ENCODE measurements at regions of chr1 and their contacts with region 1.

Region 1: DNA sequence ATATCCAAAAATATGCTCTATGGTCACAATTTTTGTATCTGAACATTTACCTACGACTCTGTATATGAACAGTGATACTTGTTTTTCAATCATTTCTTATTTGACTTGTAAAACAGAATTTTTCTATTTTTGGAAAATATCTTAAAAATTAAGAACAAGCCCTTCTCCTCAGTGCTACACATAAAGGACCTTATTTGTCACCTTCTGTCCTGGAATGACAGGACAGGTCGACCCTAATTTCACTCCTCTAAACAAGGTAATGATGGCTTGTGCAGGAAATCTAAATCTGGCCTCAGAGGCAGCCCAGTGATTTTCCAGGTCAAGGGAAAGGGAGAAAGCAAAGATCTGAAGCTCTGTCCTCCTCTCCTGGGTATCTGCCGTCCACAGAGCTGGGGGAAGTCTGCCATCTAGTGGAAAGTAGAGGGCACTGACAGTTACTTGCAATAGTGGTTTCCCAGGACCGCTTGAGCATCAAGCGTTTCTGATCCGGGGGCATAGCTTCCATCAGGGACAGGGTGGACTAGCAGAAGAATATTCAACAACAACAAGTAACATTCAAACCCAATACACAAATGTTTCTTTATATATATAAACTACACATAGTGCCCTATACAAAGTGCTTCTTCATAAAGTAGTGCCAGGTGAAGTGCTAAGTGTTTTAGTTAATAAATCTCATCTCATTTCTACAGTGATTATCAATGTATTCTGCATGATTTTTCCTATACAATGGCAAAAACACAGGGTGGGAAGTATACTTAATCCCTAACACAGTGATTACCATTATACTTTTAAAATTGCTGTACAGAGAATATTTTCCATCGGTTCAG is 74.6 kb downstream of the SLC25A24 start:
- DNase-seq: peak in 4 of 5 donors; percentile 82 to 94 (median 88)
- H3K4me3 ChIP-seq: no peak overlapping the region
- H3K27ac ChIP-seq: no peak overlapping the region
- H3K4me1 ChIP-seq: no peaks in the 10 kb centered on the region
- H3K27me3 ChIP-seq: no peaks in the 10 kb centered on the region
- CTCF ChIP-seq: peak; percentile 95

Region 2: GRCh38 chr1:107782217-107782845 is 343.2 kb before region 1 on chr1:
- intact Hi-C with region 1: loop called (anchors 5 kb)
- DNase-seq: peak in 3 of 5 donors; percentile 19 to 84 (median 78)
- H3K4me3 ChIP-seq: no peak overlapping the region
- H3K27ac ChIP-seq: no peak overlapping the region
- H3K4me1 ChIP-seq: no peaks in the 10 kb centered on the region
- H3K27me3 ChIP-seq: no peaks in the 10 kb centered on the region
- CTCF ChIP-seq: peak; percentile 47

Region 3: DNA sequence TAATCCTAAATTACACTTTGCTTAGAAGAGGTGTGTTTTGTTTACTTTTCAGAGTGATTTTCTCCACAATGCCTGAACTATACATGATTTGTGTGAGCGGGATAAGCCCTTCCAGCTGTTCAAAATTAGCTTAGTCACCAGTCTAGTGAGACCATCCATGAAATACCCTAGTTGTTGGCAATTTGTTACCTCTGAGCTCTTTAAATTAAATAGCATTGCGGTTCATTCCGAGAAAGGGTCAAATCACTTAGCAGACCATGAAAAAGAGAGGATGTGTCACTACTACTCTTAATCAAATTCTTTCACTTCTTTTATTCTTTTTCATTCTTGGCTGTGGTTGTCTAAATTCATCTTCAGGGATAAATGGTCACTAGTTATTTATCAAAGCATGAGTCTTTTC is 148.7 kb before region 1 on chr1:
- intact Hi-C with region 1: no loop called
- DNase-seq: peak in 2 of 5 donors; percentile 47 to 50
- H3K4me3 ChIP-seq: no peak overlapping the region
- H3K27ac ChIP-seq: no peak overlapping the region
- H3K4me1 ChIP-seq: peaks cover 0 to 3% (median 0%) of the 10 kb centered on the region in 3 donors
- H3K27me3 ChIP-seq: no peaks in the 10 kb centered on the region
- CTCF ChIP-seq: no peak

Measured in kidney (tissue), 22 donors.